Activated CD4-positive, alpha-beta T cell treated with anti-CD3 and anti-CD28 coated beads for 36 hours (primary cell): ENCODE measurements at regions of chr15 and their contacts with region 1.

Region 1: GRCh38 chr15:98850961-98851573 is 156.5 kb downstream of the PGPEP1L start:
- DNase-seq: peak; percentile 86
- ATAC-seq: peak; percentile 62
- H3K4me3 Mint-ChIP-seq: peak overlapping the region; percentile 86
- H3K27ac Mint-ChIP-seq: peak overlapping the region; percentile 94
- H3K4me1 Mint-ChIP-seq: peaks cover 51% of the 10 kb centered on the region
- H3K27me3 Mint-ChIP-seq: no peaks in the 10 kb centered on the region

Region 2: DNA sequence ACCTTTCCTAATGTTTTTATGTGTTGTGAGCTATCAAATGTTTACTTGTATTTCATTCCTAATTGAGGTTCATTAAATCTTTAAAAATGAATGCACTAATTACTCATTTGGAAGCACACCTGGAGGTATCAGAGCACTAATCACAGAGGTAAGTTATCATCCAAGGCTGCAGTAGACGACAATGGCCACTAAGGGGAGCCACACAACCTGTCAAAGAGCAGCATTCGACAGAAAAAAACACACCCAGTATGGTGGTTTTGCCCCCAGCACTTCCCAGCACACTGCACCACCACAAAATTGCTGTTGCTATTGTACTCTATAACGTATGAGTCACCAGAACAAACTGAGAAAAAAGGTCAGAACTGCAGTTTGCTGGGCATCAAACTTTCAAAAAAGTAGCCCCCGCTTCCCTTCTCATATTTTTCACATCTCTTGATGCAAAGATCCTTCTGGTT is 408.7 kb before region 1 on chr15:
- CTCF ChIA-PET with region 1: interaction called, 3 read pairs
- POLR2A ChIA-PET with region 1: no interaction called
- intact Hi-C with region 1: loop called in 1 of 2 experiments (anchors 1 kb)
- DNase-seq: peak; percentile 81
- ATAC-seq: peak; percentile 97
- H3K4me3 Mint-ChIP-seq: no peak overlapping the region
- H3K27ac Mint-ChIP-seq: no peak overlapping the region
- H3K4me1 Mint-ChIP-seq: peaks cover 3% of the 10 kb centered on the region
- H3K27me3 Mint-ChIP-seq: peaks cover 9% of the 10 kb centered on the region

Region 3: DNA sequence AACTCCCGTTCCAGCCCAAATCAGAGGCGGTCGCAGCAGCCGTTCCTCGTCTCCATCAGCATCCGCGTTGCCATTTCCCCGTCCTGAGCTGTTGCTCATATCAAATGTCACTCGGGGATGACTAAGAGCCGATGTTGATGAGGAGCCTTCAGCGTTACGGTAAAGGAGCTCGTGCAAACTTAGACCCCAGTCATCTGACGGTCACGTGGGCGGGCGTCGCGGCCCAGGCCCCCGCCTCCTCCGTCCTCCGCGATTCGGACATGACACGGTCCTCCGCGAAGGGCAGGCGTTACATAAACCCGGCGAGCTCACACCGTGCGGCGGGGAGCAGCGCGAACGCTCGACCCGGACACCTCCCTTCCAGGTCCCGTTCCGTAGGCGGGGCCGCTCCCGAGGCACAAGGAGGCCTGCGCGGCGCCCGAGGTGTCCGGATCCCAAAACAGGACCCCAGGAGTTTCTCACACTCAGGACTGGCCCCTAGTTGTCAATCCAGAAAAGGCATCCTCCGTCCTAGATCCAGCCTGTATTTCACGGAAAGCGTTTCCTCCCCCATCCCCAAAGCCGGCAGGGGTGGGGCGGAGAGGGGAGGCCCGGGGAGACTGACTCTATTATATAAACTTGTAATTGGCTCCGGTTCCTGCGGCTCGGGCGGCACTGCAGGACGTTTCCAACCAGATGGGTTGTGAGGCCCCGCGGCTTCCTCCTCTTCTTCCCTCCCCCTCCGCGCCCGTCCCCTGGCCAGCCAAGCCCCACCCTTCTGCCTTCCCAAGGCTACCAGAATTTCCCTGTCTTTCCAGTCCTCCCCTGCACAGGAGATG is 302.7 kb before region 1 on chr15:
- CTCF ChIA-PET with region 1: no interaction called
- POLR2A ChIA-PET with region 1: no interaction called
- intact Hi-C with region 1: loop called in 1 of 2 experiments (anchors 1 kb)
- DNase-seq: peak; percentile 79
- ATAC-seq: peak; percentile 96
- H3K4me3 Mint-ChIP-seq: peak overlapping the region; percentile 77
- H3K27ac Mint-ChIP-seq: peak overlapping the region; percentile 96
- H3K4me1 Mint-ChIP-seq: peaks cover 17% of the 10 kb centered on the region
- H3K27me3 Mint-ChIP-seq: peaks cover 41% of the 10 kb centered on the region

Region 4: DNA sequence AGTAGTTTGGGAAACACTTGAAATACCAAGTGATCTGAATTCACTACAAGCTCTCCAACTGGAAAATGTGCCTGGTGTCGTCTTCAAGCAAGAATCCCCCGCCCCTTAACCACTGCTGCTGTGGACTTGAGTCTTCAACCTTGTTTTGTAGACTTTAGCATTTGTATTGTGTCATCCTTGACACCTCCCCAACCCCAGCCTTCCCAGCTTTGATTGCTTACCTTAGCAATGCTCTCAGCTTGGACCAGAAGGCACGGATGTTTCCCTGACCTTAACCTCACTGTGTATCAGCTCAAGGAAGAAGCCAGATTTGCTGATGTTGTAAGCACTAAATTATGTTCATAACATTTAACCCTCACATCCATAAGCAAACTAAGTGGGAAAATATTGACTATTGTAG is 56.3 kb before region 1 on chr15:
- CTCF ChIA-PET with region 1: interaction called, 10 read pairs
- POLR2A ChIA-PET with region 1: no interaction called
- intact Hi-C with region 1: no loop called
- DNase-seq: no peak
- ATAC-seq: no peak
- H3K4me3 Mint-ChIP-seq: no peak overlapping the region
- H3K27ac Mint-ChIP-seq: no peak overlapping the region
- H3K4me1 Mint-ChIP-seq: peaks cover 61% of the 10 kb centered on the region
- H3K27me3 Mint-ChIP-seq: no peaks in the 10 kb centered on the region

Region 5: DNA sequence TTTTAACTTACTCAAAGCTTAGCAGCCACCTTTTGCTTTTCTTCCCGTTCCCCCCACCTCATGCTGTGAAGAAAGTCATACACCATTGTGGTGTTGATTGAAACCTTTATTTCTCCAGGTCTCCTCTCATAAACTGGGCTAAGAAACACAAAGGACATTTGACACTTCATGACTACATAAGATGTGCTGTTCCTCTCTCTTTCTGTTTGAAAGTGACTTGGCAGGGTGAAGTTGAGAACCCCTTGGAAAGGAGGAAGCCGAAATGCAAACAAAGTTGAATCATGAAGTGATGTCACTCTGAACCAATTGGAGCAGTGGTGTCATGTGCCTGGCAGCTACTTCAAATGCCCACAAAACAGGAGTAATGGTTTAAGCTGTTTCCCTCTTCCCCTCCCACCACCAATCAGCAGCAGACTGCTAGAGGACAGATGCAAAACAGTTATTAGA is 28.0 kb before region 1 on chr15:
- CTCF ChIA-PET with region 1: interaction called, 10 read pairs
- POLR2A ChIA-PET with region 1: no interaction called
- intact Hi-C with region 1: no loop called
- DNase-seq: peak; percentile 12
- ATAC-seq: peak; percentile 73
- H3K4me3 Mint-ChIP-seq: no peak overlapping the region
- H3K27ac Mint-ChIP-seq: no peak overlapping the region
- H3K4me1 Mint-ChIP-seq: peaks cover 6% of the 10 kb centered on the region
- H3K27me3 Mint-ChIP-seq: no peaks in the 10 kb centered on the region

Region 6: GRCh38 chr15:98966091-98966787 is 115.2 kb after region 1 on chr15:
- CTCF ChIA-PET with region 1: no interaction called
- POLR2A ChIA-PET with region 1: no interaction called
- intact Hi-C with region 1: no loop called
- DNase-seq: no peak
- ATAC-seq: no peak
- H3K4me3 Mint-ChIP-seq: no peak overlapping the region
- H3K27ac Mint-ChIP-seq: no peak overlapping the region
- H3K4me1 Mint-ChIP-seq: no peaks in the 10 kb centered on the region
- H3K27me3 Mint-ChIP-seq: no peaks in the 10 kb centered on the region

Region 7: DNA sequence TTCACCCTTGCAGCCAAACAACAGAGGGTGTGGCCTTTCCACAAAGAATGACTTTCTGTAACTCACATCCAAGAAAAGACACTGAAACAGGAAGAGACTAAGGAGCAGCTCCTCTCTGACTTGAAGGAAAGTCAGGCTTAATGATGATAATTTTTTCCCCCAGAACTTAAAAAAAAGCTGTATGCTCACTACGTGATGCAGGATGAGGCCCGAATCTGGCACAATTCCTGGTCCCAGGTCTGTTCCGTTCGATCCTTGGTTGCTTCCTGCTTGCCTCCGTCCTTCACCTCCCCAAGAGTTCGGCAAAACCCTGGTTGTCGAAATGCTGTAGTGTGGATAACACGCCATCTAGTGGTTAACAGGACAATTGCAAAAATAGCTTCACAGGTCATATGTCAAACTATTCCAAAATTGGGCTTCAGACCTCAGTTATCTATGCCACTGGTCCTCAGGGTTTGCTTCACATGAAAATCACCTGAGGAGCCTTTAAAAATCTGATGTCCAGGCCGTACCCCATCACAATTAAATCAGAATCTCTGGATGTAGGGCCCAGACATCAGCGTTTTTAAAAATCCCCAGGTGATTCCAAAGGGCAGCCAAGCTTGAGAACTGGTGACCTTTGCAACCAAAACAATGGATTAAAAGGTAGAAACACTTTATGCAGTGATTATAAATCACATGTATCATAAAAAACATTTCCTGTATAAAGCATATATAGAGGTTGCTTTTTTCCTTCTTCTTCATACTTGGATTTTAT is 225.7 kb after region 1 on chr15:
- CTCF ChIA-PET with region 1: interaction called, 5 read pairs
- POLR2A ChIA-PET with region 1: no interaction called
- intact Hi-C with region 1: loop called in 1 of 2 experiments (anchors 1 kb)
- DNase-seq: peak; percentile 58
- ATAC-seq: peak; percentile 87
- H3K4me3 Mint-ChIP-seq: peak overlapping the region; percentile 65
- H3K27ac Mint-ChIP-seq: peak overlapping the region; percentile 89
- H3K4me1 Mint-ChIP-seq: peaks cover 6% of the 10 kb centered on the region
- H3K27me3 Mint-ChIP-seq: peaks cover 10% of the 10 kb centered on the region